ENCODE measurements at regions of chr10 and their contacts with region 1.

Region 1: GRCh38 chr10:93702211-93703001 is at the start of gene FRA10AC1:
- DNase-seq: peak; percentile 94
- H3K4me3 ChIP-seq: peak within 1 kb of the TSS; percentile 63 to 85
- H3K27ac ChIP-seq: peak within 1 kb of the TSS; percentile 81 to 85
- H3K4me1 ChIP-seq: no peaks in the 10 kb centered on the region
- H3K27me3 ChIP-seq: no peaks in the 10 kb centered on the region
- CTCF ChIP-seq: peak; percentile 35 to 61 (median 40)
- POLR2A ChIP-seq: no peak
- total RNA-seq, gene FRA10AC1: 30.5 to 46.9 TPM

Region 2: GRCh38 chr10:93816123-93816747 is 113.8 kb after region 1 on chr10:
- intact Hi-C with region 1: loop called (anchors 10 kb)
- DNase-seq: peak; percentile 80
- H3K4me3 ChIP-seq: no peak overlapping the region
- H3K27ac ChIP-seq: no peak overlapping the region
- H3K4me1 ChIP-seq: peaks cover 7% of the 10 kb centered on the region
- H3K27me3 ChIP-seq: no peaks in the 10 kb centered on the region
- CTCF ChIP-seq: peak; percentile 61 to 65 (median 65)
- POLR2A ChIP-seq: no peak

Region 3: GRCh38 chr10:93849593-93849992 is 147.2 kb after region 1 on chr10:
- intact Hi-C with region 1: no loop called
- DNase-seq: no peak
- H3K4me3 ChIP-seq: no peak overlapping the region
- H3K27ac ChIP-seq: no peak overlapping the region
- H3K4me1 ChIP-seq: no peaks in the 10 kb centered on the region
- H3K27me3 ChIP-seq: no peaks in the 10 kb centered on the region
- CTCF ChIP-seq: no peak
- POLR2A ChIP-seq: no peak

Region 4: DNA sequence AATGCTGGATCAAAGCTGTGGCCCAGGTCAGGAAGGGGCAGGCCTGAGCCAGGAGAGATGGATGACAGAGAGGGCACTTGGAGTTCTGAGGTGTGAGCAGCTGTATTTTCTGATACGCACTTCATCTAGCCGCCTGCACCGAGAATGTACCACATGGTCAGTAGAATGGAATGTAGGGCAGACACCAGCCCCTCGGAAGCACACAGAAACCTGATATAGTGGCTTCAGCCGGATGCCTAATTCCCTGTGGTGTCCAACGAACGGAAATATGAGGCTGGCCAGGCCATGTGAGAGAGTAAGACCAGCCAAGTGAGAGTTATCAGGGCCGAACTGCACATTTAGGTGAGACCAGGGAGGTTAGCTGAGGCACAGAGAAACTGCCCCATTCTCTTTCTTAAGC is 244.6 kb after region 1 on chr10:
- intact Hi-C with region 1: no loop called
- DNase-seq: peak; percentile 31
- H3K4me3 ChIP-seq: no peak overlapping the region
- H3K27ac ChIP-seq: peak overlapping the region in 1 of 2 donors; percentile 42
- H3K4me1 ChIP-seq: peaks cover 13% of the 10 kb centered on the region
- H3K27me3 ChIP-seq: no peaks in the 10 kb centered on the region
- CTCF ChIP-seq: no peak
- POLR2A ChIP-seq: no peak

Measured in testis (tissue), 5 donors.